Activated naive CD4-positive, alpha-beta T cell treated with anti-CD3 and anti-CD28 coated beads for 36 hours (primary cell): ENCODE measurements at regions of chr17 and their contacts with region 1.

Region 1: GRCh38 chr17:38667099-38667786 is 7.5 kb downstream of the EPOP start:
- DNase-seq: peak; percentile 71
- H3K4me3 Mint-ChIP-seq: no peak overlapping the region
- H3K27ac Mint-ChIP-seq: no peak overlapping the region
- H3K4me1 Mint-ChIP-seq: peaks cover 15% of the 10 kb centered on the region
- H3K27me3 Mint-ChIP-seq: peaks cover 46% of the 10 kb centered on the region

Region 2: GRCh38 chr17:38421171-38421841 is 245.9 kb before region 1 on chr17:
- CTCF ChIA-PET with region 1: interaction called, 4 read pairs
- intact Hi-C with region 1: loop called (anchors 2 kb)
- DNase-seq: no peak
- H3K4me3 Mint-ChIP-seq: no peak overlapping the region
- H3K27ac Mint-ChIP-seq: no peak overlapping the region
- H3K4me1 Mint-ChIP-seq: peaks cover 5% of the 10 kb centered on the region
- H3K27me3 Mint-ChIP-seq: peaks cover 56% of the 10 kb centered on the region

Region 3: DNA sequence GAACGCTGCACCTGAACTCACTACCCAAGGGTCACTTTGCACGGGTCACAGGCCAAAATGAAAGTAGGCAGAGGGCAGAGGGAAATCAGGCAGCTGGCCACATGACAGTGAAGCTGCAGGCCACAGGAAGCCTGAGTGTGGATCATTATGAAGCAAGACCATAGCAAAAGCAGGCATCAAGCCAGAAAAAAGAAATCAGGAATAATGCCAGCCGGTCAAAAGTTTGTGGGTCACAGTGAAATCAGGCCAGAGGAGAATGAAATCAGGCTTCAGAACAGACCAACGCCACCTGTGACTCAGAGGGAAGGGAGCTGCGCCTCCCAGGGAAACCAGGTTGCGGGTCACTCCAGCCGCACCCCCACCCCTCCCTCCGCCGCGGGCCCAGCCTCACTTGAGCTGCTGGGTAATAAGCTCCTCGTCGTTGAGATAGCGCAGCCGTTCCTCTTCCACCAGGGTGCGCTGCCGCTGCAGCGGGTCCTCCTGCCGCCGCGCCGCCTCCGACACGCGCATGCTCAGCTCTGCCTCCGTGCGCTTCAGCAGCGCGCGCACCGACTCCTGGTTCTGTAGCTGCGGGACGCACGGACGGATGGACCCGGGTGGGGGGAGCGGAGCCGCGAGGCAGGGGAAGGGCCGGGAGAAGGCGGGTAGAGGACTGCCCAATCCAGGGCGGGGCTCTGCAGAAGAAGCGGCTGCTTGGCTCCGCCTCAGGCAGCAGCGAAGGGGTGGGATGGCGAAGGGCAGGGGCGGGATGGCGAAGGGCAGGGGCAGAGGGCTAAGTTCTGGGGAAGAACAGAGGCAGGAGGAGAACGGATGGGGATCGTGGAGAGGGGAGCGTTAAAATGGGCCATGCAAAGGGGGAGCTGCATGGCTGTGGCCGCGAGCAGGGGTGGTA is 109.2 kb before region 1 on chr17:
- CTCF ChIA-PET with region 1: interaction called, 116 read pairs
- intact Hi-C with region 1: loop called (anchors 1 kb)
- DNase-seq: peak; percentile 92
- H3K4me3 Mint-ChIP-seq: peak overlapping the region; percentile 89
- H3K27ac Mint-ChIP-seq: no peak overlapping the region
- H3K4me1 Mint-ChIP-seq: peaks cover 21% of the 10 kb centered on the region
- H3K27me3 Mint-ChIP-seq: peaks cover 26% of the 10 kb centered on the region

Region 4: GRCh38 chr17:38605888-38606645 is 61.2 kb before region 1 on chr17 and contains the start of gene SRCIN1:
- CTCF ChIA-PET with region 1: interaction called, 11 read pairs
- intact Hi-C with region 1: loop called (anchors 5 kb)
- DNase-seq: peak; percentile 52
- H3K4me3 Mint-ChIP-seq: peak within 1 kb of the TSS; percentile 58
- H3K27ac Mint-ChIP-seq: no peak within 1 kb of the TSS
- H3K4me1 Mint-ChIP-seq: peaks cover 13% of the 10 kb centered on the region
- H3K27me3 Mint-ChIP-seq: peaks cover 65% of the 10 kb centered on the region
- total RNA-seq, gene SRCIN1: 0.67 to 0.94 TPM

Region 5: GRCh38 chr17:38735161-38735997 is 68.1 kb after region 1 on chr17:
- CTCF ChIA-PET with region 1: interaction called, 31 read pairs
- intact Hi-C with region 1: no loop called
- DNase-seq: peak; percentile 77
- H3K4me3 Mint-ChIP-seq: no peak overlapping the region
- H3K27ac Mint-ChIP-seq: peak overlapping the region; percentile 37
- H3K4me1 Mint-ChIP-seq: peaks cover 47% of the 10 kb centered on the region
- H3K27me3 Mint-ChIP-seq: no peaks in the 10 kb centered on the region